ENCODE measurements at regions of chr16 and their contacts with region 1.

Region 1: GRCh38 chr16:77963185-77964044 is 58.9 kb upstream of the CLEC3A start:
- DNase-seq: no peak
- ATAC-seq: no peak
- H3K4me3 ChIP-seq: no peak overlapping the region
- H3K27ac ChIP-seq: no peak overlapping the region
- H3K4me1 ChIP-seq: no peaks in the 10 kb centered on the region
- H3K27me3 ChIP-seq: no peaks in the 10 kb centered on the region
- CTCF ChIP-seq: no peak
- POLR2A ChIP-seq: no peak

Region 2: DNA sequence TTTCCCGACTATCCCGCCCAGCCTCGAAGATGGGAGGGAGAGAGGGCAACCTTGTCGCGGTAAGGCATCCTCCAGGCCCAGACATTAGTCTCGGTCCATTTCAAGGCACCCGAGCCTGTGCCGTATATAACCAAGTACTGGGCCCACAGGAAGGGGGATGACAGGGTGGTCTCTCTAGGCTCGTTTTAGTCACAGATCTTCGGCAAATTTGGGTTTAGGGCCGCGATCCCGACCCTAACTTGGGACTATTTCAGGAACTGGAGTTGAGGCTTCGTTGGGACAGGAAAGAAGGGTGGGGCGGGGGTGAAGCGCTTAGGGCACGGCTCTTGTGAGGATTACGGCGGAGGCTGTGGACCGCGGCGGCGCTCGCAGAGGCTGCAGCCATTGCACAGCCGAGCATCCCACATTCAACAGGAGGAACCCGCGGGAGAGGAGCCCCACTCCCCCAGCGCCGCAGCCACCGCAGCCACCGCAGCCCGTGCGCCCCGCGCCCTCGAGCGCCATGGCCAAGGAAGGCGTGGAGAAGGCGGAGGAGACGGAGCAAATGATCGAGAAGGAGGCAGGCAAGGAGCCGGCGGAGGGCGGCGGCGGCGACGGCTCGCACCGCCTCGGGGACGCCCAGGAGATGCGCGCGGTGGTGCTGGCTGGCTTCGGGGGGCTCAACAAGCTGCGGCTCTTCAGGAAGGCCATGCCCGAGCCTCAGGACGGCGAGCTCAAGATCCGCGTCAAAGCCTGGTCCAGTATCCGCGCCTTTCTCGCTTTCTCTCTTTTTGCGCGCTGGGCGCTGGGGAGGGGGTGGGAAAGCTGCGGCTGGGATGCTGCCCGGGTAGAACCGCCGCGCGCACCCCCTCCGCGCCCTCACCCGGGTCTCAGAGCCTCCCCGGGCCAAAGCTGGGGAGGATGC is 175.0 kb before region 1 on chr16 and contains the start of gene VAT1L:
- intact Hi-C with region 1: loop called in 1 of 2 experiments (anchors 10 kb)
- DNase-seq: peak in 1 of 3 donors; percentile 33
- ATAC-seq: peak; percentile 64 to 83 (median 76)
- H3K4me3 ChIP-seq: peak within 1 kb of the TSS; percentile 23 to 51 (median 37)
- H3K27ac ChIP-seq: no peak within 1 kb of the TSS
- H3K4me1 ChIP-seq: peaks cover 0 to 10% (median 0%) of the 10 kb centered on the region in 4 donors
- H3K27me3 ChIP-seq: peaks cover 0 to 20% of the 10 kb centered on the region in 2 donors
- CTCF ChIP-seq: no peak
- POLR2A ChIP-seq: no peak
- total RNA-seq, gene VAT1L: 0.19 to 0.64 (median 0.51) TPM in 5 of 6 experiments, not detected in the other